Activated CD4-positive, alpha-beta T cell treated with anti-CD3 and anti-CD28 coated beads, Interleukin-2, amount 10 ng/mL, durations not matched to agents 7 days and 5 days (primary cell): ENCODE measurements at regions of chr1 and their contacts with region 1.

Region 1: DNA sequence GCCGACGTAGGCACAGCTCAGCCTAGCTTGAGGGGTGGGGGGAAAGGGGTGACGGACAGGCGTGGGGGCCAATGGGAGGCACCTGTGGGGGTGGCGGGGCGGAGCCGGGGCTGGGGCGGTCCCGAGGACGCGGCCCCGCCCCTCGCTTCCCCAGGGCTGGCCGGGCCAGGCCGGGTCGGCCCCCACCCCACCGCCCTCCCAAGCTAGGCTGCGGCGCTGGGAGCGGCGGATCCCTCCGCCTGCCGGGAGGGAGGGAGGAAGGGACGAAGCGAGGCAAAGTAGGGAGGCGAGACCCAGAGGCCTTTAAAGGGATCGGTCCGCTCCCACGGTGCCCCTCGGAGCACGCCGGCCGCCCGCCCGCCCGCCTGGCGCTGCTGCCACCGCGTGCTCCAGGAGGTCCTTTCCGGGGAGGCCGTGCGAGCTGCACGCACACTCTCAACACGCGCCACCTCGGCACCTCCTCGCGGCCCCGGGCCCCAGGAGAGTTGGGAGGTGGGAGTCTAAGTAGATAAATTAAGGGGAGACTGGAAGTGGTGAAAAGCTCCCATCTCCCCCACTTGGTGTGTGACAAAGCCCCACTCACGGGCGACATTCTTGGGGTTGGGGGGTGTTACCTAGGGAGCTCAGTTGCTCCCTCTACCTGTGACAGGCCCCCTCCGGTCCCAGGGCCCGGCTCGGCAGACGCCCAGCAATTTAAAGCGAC is 373 bp upstream of the MEF2D start:
- DNase-seq: peak; percentile 92
- H3K4me3 Mint-ChIP-seq: peak overlapping the region; percentile 87
- H3K27ac Mint-ChIP-seq: peak overlapping the region; percentile 99
- H3K4me1 Mint-ChIP-seq: peaks cover 76% of the 10 kb centered on the region
- H3K27me3 Mint-ChIP-seq: no peaks in the 10 kb centered on the region

Region 2: GRCh38 chr1:156456622-156457465 is 44.1 kb before region 1 on chr1:
- CTCF ChIA-PET with region 1: interaction called, 10 read pairs
- POLR2A ChIA-PET with region 1: no interaction called
- DNase-seq: peak; percentile 96
- H3K4me3 Mint-ChIP-seq: peak overlapping the region; percentile 82
- H3K27ac Mint-ChIP-seq: peak overlapping the region; percentile 95
- H3K4me1 Mint-ChIP-seq: peaks cover 18% of the 10 kb centered on the region
- H3K27me3 Mint-ChIP-seq: peaks cover 6% of the 10 kb centered on the region

Region 3: GRCh38 chr1:156480411-156481192 is 20.3 kb before region 1 on chr1:
- CTCF ChIA-PET with region 1: interaction called, 33 read pairs
- POLR2A ChIA-PET with region 1: interaction called, 7 read pairs
- DNase-seq: peak; percentile 85
- H3K4me3 Mint-ChIP-seq: no peak overlapping the region
- H3K27ac Mint-ChIP-seq: peak overlapping the region; percentile 22
- H3K4me1 Mint-ChIP-seq: peaks cover 35% of the 10 kb centered on the region
- H3K27me3 Mint-ChIP-seq: no peaks in the 10 kb centered on the region

Region 4: GRCh38 chr1:156489166-156489934 is 11.6 kb before region 1 on chr1:
- CTCF ChIA-PET with region 1: interaction called, 19 read pairs
- POLR2A ChIA-PET with region 1: interaction called, 4 read pairs
- DNase-seq: peak; percentile 25
- H3K4me3 Mint-ChIP-seq: peak overlapping the region; percentile 7
- H3K27ac Mint-ChIP-seq: peak overlapping the region; percentile 82
- H3K4me1 Mint-ChIP-seq: peaks cover 76% of the 10 kb centered on the region
- H3K27me3 Mint-ChIP-seq: no peaks in the 10 kb centered on the region